Ascending aorta (tissue), 2 donors: ENCODE measurements at regions of chr4 and their contacts with region 1.

Region 1: DNA sequence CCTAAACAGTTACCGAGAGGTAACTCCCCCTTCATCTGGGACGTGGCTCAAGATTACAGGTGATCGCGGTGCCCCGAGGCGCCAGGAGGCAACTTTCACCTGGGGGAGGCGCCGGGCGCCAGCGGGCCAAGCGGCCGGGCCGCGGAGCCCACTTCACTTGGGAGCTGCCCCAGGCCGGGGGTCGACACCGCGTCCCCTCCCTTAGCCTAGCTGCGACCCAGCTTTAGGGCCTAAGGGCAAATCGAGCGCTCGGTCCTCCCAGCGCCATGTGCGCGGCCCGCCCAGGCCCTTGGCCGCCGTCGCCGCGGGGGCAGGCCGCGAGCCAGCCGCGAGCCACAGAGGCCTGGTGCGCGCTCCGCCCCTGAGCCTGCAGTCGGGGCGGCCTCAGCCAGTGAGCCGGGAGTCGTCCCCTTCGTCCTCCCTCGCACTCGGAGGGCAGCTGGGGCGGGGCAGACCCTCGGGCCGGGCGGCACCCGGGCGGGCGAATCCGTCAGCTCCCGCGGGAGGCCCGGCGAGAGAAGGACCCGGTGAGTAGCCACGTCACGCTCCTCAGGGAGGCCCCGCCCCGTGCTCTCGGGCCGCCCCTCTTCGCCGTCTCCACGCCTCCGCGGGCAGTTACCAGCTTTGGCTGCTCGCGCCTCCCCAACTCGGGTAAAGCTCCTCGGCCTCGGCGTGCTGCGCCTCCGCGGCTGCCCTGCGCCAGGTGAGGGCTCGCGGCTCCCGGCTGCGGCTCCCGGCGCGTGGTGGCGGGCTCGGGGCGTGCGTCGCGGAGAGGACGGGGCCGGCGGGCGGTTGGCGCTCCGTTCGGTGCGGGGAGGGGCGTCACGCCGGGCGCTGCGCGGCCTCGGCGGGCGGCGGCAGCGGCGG is at the start of gene LARP1B:
- DNase-seq: peak; percentile 85 to 97
- H3K4me3 ChIP-seq: peak within 1 kb of the TSS; percentile 62 to 81
- H3K27ac ChIP-seq: peak within 1 kb of the TSS; percentile 93 to 97
- H3K4me1 ChIP-seq: peaks cover 0 to 4% of the 10 kb centered on the region in 2 donors
- H3K27me3 ChIP-seq: no peaks in the 10 kb centered on the region
- CTCF ChIP-seq: no peak
- total RNA-seq, gene LARP1B: 8.6 TPM

Region 2: GRCh38 chr4:127632420-127633403 is 428.2 kb before region 1 on chr4 and contains the start of gene INTU:
- intact Hi-C with region 1: loop called (anchors 10 kb)
- DNase-seq: peak; percentile 87 to 97
- H3K4me3 ChIP-seq: peak within 1 kb of the TSS; percentile 60 to 79
- H3K27ac ChIP-seq: peak within 1 kb of the TSS; percentile 29 to 46
- H3K4me1 ChIP-seq: peaks cover 0 to 3% of the 10 kb centered on the region in 2 donors
- H3K27me3 ChIP-seq: no peaks in the 10 kb centered on the region
- CTCF ChIP-seq: no peak
- total RNA-seq, gene INTU: 3.1 TPM

Region 3: GRCh38 chr4:127782274-127783025 is 278.5 kb before region 1 on chr4 and contains the start of gene HSPA4L:
- intact Hi-C with region 1: loop called (anchors 2 kb)
- DNase-seq: peak; percentile 23 to 76
- H3K4me3 ChIP-seq: peak within 1 kb of the TSS; percentile 81 to 86
- H3K27ac ChIP-seq: peak within 1 kb of the TSS; percentile 80 to 89
- H3K4me1 ChIP-seq: no peaks in the 10 kb centered on the region
- H3K27me3 ChIP-seq: no peaks in the 10 kb centered on the region
- CTCF ChIP-seq: peak; percentile 33 to 41 (median 33)
- total RNA-seq, gene HSPA4L: 5.5 TPM

Region 4: GRCh38 chr4:127880764-127881562 is 180.0 kb before region 1 on chr4 and contains the start of gene PLK4:
- intact Hi-C with region 1: loop called (anchors 5 kb)
- DNase-seq: peak; percentile 84 to 96
- H3K4me3 ChIP-seq: peak within 1 kb of the TSS; percentile 79 to 85
- H3K27ac ChIP-seq: peak within 1 kb of the TSS; percentile 70 to 72
- H3K4me1 ChIP-seq: peaks cover 0 to 4% of the 10 kb centered on the region in 2 donors
- H3K27me3 ChIP-seq: no peaks in the 10 kb centered on the region
- CTCF ChIP-seq: no peak
- total RNA-seq, gene PLK4: not detected

Region 5: GRCh38 chr4:127965062-127965802 is 95.7 kb before region 1 on chr4 and contains the starts of genes ABHD18 and MFSD8:
- intact Hi-C with region 1: loop called (anchors 1 kb)
- DNase-seq: peak; percentile 98 to 99
- H3K4me3 ChIP-seq: peak within 1 kb of the TSS; percentile 71 to 86
- H3K27ac ChIP-seq: peak within 1 kb of the TSS; percentile 93 to 94
- H3K4me1 ChIP-seq: peaks cover 0 to 12% of the 10 kb centered on the region in 2 donors
- H3K27me3 ChIP-seq: no peaks in the 10 kb centered on the region
- CTCF ChIP-seq: peak; percentile 39 to 55 (median 46)
- total RNA-seq, gene ABHD18: 3.5 TPM
- total RNA-seq, gene MFSD8: 26.3 TPM

Region 6: DNA sequence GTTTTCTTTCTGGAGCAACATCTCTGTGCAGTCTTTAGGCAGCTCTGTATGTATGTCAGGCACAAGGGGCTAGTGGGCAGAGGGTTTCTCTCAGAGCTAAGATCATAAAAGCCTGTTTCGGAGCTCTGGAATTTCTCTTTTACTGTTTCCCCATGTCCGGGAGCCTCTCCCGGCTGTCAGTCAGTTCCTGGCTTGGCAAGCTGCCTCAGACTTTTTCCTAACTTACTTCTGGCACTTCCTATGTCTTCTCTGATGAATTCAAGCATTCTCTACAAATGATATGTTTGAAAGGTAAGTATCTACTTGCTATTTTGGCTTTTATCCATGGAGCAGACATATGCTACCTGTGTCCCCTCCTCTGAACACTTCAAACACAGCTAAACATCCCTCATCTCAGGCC is 356.0 kb after region 1 on chr4:
- intact Hi-C with region 1: no loop called
- DNase-seq: no peak
- H3K4me3 ChIP-seq: no peak overlapping the region
- H3K27ac ChIP-seq: no peak overlapping the region
- H3K4me1 ChIP-seq: no peaks in the 10 kb centered on the region
- H3K27me3 ChIP-seq: no peaks in the 10 kb centered on the region
- CTCF ChIP-seq: no peak

Region 7: DNA sequence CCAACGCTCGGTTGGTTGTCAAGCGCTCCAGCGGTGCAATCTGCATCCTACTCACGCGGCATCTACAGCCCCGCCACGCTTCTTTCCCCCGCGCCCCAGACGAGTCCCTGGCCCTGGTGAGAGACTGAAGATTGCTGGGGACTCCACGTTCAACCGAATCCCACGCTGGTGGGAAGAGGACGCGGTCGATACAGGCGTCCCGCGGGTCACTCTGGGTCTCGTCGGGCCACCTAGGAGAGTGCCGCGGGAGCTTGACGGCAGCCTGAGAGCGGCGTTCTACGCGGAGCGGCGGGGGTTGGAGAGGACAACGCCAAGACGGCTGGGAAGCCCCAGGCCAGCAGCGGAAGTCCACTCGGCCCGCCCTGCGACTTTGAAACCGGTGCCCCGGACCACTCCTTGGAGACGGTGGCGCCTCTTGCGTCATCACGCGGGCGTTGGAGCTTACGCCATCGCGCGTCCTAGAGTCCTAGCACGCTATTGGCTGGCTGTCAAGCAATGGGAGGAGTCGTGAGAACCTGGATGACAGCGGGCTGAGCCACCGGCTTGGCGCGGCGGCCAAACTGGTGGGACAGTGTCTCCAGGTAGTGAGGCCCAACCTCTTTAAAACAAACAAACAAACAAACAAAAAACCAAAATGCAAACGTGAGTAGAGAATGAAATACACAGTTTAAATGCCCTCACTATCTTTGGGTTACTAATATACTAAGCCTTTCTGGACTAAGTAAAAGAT is 1032.4 kb after region 1 on chr4 and contains the start of gene SCLT1:
- intact Hi-C with region 1: loop called (anchors 2 kb)
- DNase-seq: peak; percentile 92 to 99
- H3K4me3 ChIP-seq: peak within 1 kb of the TSS; percentile 74 to 75
- H3K27ac ChIP-seq: peak within 1 kb of the TSS; percentile 91 to 92
- H3K4me1 ChIP-seq: peaks cover 0 to 14% of the 10 kb centered on the region in 2 donors
- H3K27me3 ChIP-seq: no peaks in the 10 kb centered on the region
- CTCF ChIP-seq: no peak
- total RNA-seq, gene SCLT1: 7.0 TPM

Region 8: DNA sequence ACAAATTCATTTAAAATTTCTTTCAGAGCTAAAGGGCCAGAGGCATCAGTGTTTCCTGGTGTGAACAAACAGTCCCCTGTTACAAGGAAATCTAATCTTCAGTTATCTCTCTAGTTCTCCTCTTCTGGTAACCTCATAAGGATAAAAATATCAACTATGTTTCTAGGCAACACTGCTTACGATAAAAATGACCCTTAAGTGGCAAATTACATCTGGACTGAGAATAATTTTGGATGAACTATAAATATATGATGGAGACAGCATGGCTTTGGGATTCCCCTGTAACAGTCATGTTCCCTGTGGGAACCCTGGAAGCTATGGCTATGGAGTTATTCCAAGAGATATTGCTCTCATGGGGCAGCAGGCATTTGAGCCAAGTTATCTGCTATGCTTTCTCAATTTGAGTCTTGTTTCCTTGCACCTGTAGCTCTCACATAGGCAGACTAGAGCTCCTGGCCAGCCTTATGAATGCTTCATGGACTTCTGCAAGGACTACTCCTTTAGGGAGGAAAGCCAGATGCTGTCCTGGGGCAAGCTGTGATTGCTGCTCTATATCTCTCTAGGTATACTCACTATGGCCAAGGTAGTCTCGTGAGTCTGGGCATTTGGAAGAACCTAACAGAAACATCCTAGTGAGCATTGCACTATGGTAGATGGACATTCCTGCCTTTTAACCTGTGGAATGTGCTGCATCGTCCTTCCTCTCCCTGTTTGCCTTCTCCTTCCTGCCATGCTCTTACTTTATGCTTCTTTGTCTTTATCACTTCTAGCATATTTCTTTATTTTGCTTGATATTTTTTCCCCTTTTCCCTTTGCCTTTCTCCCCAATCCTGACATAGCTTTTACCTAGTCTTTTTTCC is 1049.3 kb after region 1 on chr4:
- intact Hi-C with region 1: no loop called
- DNase-seq: no peak
- H3K4me3 ChIP-seq: no peak overlapping the region
- H3K27ac ChIP-seq: no peak overlapping the region
- H3K4me1 ChIP-seq: no peaks in the 10 kb centered on the region
- H3K27me3 ChIP-seq: no peaks in the 10 kb centered on the region
- CTCF ChIP-seq: no peak